Mammary epithelial cell (primary cell): ENCODE measurements at regions of chr5 and their contacts with region 1.

Region 1: DNA sequence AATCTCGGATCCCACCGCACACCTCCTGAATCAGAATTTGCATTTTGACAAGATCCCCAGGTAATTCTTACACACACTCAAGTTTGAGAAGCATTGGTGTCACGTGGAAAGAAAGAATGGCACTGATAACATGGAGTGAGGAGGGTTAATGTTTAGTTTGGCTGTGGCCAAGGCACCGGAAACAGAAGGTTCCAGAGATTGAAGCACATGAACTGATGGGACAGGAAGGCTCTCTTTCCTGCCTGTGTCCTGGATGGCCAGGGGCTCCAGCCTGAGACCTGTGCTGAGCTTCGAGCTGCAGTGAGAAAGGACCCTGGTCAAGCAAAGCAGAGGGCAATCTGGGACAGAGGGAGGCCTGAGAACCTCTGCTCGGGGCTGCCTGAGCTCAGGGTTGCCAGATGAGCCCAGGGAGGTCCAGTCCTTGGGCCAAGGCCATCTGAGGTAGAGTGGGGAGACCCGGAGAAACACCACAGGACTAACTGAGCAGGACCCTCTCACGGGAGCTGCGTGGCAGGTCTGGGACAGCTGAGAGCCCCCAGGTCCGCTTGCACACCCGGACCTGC is 27.3 kb downstream of the AFAP1L1 start:
- DNase-seq: no peak
- H3K4me3 ChIP-seq: no peak overlapping the region
- H3K27ac ChIP-seq: no peak overlapping the region
- H3K4me1 ChIP-seq: peaks cover 30% of the 10 kb centered on the region
- H3K27me3 ChIP-seq: no peaks in the 10 kb centered on the region
- CTCF ChIP-seq: no peak

Region 2: GRCh38 chr5:149228618-149229297 is 70.2 kb before region 1 on chr5:
- CTCF ChIA-PET with region 1: no interaction called
- dilution Hi-C with region 1: no loop called
- in situ Hi-C with region 1: no loop called
- intact Hi-C with region 1: no loop called
- DNase-seq: peak; percentile 76
- H3K4me3 ChIP-seq: no peak overlapping the region
- H3K27ac ChIP-seq: no peak overlapping the region
- H3K4me1 ChIP-seq: peaks cover 21% of the 10 kb centered on the region
- H3K27me3 ChIP-seq: no peaks in the 10 kb centered on the region
- CTCF ChIP-seq: peak; percentile 73 to 85

Region 3: GRCh38 chr5:149367249-149367971 is 68.5 kb after region 1 on chr5:
- CTCF ChIA-PET with region 1: no interaction called
- dilution Hi-C with region 1: loop called (anchors 5 kb)
- in situ Hi-C with region 1: no loop called
- intact Hi-C with region 1: no loop called
- DNase-seq: peak; percentile 54
- H3K4me3 ChIP-seq: no peak overlapping the region
- H3K27ac ChIP-seq: no peak overlapping the region
- H3K4me1 ChIP-seq: no peaks in the 10 kb centered on the region
- H3K27me3 ChIP-seq: no peaks in the 10 kb centered on the region
- CTCF ChIP-seq: peak; percentile 77 to 85

Region 4: GRCh38 chr5:149838881-149839739 is 540.2 kb after region 1 on chr5:
- CTCF ChIA-PET with region 1: no interaction called
- dilution Hi-C with region 1: no loop called
- in situ Hi-C with region 1: no loop called
- intact Hi-C with region 1: no loop called
- DNase-seq: peak; percentile 90
- H3K4me3 ChIP-seq: no peak overlapping the region
- H3K27ac ChIP-seq: no peak overlapping the region
- H3K4me1 ChIP-seq: peaks cover 18% of the 10 kb centered on the region
- H3K27me3 ChIP-seq: no peaks in the 10 kb centered on the region
- CTCF ChIP-seq: peak in 1 of 2 donors; percentile 4

Region 5: GRCh38 chr5:149932445-149933350 is 633.8 kb after region 1 on chr5:
- CTCF ChIA-PET with region 1: no interaction called
- dilution Hi-C with region 1: no loop called
- in situ Hi-C with region 1: no loop called
- intact Hi-C with region 1: no loop called
- DNase-seq: no peak
- H3K4me3 ChIP-seq: no peak overlapping the region
- H3K27ac ChIP-seq: no peak overlapping the region
- H3K4me1 ChIP-seq: peaks cover 31% of the 10 kb centered on the region
- H3K27me3 ChIP-seq: no peaks in the 10 kb centered on the region
- CTCF ChIP-seq: no peak